Heart left ventricle (tissue), 16 donors: ENCODE measurements at regions of chr5 and their contacts with region 1.

Region 1: DNA sequence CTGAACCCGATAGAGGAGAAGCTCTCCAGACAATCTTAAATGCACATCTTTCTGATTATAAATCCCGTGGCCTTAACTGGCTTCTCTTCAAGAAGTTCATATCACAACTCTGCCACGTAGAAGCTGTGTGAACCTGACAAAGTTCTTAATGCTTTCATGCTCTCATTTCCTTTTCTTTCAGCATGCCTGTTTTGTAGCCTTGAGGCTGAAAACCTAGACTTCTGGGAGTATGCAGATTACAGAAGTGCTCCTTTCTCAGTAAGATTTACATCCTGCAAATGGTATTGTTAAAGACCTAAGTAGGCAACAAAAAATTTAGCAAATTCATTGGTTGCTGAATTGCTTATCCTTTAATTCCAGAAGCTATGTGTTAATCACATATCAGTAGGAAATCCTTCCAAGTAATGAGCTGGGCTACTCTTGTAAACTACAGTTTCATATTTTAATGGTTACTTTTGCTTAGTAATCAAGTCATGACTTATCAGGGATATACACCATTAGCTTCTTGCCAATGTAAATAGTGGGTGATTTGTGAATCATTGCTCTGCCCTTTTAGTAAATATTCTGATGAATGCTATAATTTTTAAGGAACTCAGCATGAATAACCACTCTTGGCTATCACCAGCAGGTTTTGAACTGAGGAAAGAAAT is 334.7 kb downstream of the FBXL7 start:
- DNase-seq: no peak
- ATAC-seq: peak in 1 of 4 donors; percentile 44
- H3K4me3 ChIP-seq: no peak overlapping the region
- H3K27ac ChIP-seq: peak overlapping the region in 1 of 12 donors; percentile 2
- H3K4me1 ChIP-seq: peaks cover 0 to 66% (median 37%) of the 10 kb centered on the region in 12 donors
- H3K27me3 ChIP-seq: no peaks in the 10 kb centered on the region
- CTCF ChIP-seq: no peak
- POLR2A ChIP-seq: no peak

Region 2: GRCh38 chr5:15983392-15983791 is 148.7 kb after region 1 on chr5:
- intact Hi-C with region 1: loop called in 1 of 10 experiments (anchors 10 kb)
- DNase-seq: no peak
- ATAC-seq: peak in 2 of 4 donors; percentile 36 to 39
- H3K4me3 ChIP-seq: no peak overlapping the region
- H3K27ac ChIP-seq: no peak overlapping the region
- H3K4me1 ChIP-seq: peaks cover 0 to 12% (median 4%) of the 10 kb centered on the region in 12 donors
- H3K27me3 ChIP-seq: no peaks in the 10 kb centered on the region
- CTCF ChIP-seq: no peak
- POLR2A ChIP-seq: no peak

Region 3: GRCh38 chr5:16143381-16144049 is 308.8 kb after region 1 on chr5:
- intact Hi-C with region 1: loop called in 1 of 10 experiments (anchors 10 kb)
- DNase-seq: no peak
- ATAC-seq: peak; percentile 46 to 76 (median 64)
- H3K4me3 ChIP-seq: no peak overlapping the region
- H3K27ac ChIP-seq: peak overlapping the region; percentile 46 to 85 (median 70)
- H3K4me1 ChIP-seq: peaks cover 0 to 53% (median 7%) of the 10 kb centered on the region in 12 donors
- H3K27me3 ChIP-seq: no peaks in the 10 kb centered on the region
- CTCF ChIP-seq: no peak
- POLR2A ChIP-seq: no peak